HepG2 (cell line): ENCODE measurements at regions of chr22 and their contacts with region 1.

Region 1: DNA sequence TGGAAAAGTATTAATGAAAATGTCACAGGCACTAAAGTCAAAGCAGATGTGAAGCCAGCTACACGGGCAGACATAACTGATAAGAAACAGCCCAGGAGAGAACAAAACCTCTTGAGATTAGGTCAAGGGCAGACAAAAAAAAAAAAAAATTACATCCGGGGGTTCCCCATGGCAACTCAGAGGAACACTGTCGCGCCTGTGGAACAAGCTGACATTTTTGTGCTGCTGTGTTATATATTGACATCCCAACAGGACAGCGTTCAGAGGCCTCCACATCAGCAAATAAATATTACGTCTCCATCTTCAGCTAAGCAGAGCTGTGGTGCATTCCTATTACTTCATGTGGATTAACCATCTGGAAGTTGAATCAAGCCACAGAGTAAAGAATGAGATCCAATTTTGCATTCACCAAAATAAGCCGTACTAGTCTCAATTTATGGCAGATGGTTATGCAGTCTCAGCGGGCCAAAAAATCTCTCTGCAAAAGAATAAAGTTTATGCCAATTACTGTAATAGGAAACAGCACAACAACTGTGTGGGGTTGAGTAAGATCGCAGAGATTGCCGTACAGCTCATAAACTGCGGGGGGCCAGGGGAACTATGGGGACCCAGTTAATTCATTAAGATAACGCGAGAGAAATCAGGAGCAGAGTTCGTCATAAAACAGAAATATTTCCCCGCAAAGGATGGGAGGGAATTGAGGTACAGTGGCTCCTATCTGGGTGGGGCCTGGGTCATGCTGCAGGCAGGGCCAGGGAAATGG is 41.3 kb upstream of the MN1 start:
- DNase-seq: no peak
- ATAC-seq: no peak
- H3K4me3 ChIP-seq: no peak overlapping the region
- H3K27ac ChIP-seq: no peak overlapping the region
- H3K4me1 ChIP-seq: no peaks in the 10 kb centered on the region
- H3K27me3 ChIP-seq: no peaks in the 10 kb centered on the region
- CTCF ChIP-seq: no peak
- EP300 ChIP-seq: no peak
- POLR2A ChIP-seq: no peak
- RAD21 ChIP-seq: no peak

Region 2: DNA sequence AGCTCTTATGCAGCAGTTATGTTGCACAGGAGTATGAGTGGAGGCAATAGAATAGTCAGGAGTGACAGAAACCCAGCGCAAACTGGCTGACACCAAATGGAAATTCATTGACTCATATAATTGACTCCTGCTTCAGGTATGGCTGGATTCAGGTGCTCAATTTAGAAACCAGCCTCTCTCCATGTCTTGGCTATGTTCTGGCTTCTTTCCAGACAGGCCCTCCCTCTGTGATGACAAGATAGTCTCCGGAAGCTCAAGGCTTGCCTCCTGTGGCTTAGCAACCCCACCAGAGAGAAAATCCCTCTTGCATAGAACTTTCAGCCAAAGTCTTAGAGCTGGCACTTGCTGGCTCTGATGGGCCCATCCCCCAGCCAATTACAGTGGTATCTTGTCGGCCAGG is 13.2 kb before region 1 on chr22:
- CTCF ChIA-PET with region 1: no interaction called
- POLR2A ChIA-PET with region 1: no interaction called
- in situ Hi-C with region 1: no loop called
- intact Hi-C with region 1: loop called (anchors 1 kb)
- DNase-seq: no peak
- ATAC-seq: no peak
- H3K4me3 ChIP-seq: no peak overlapping the region
- H3K27ac ChIP-seq: no peak overlapping the region
- H3K4me1 ChIP-seq: 0 out of 2 replicates have a peak, but pooled peaks cover 6% of the 10 kb centered on the region
- H3K27me3 ChIP-seq: no peaks in the 10 kb centered on the region
- CTCF ChIP-seq: no peak
- EP300 ChIP-seq: no peak
- POLR2A ChIP-seq: no peak
- RAD21 ChIP-seq: no peak

Region 3: GRCh38 chr22:27903805-27904473 is 61.1 kb after region 1 on chr22:
- CTCF ChIA-PET with region 1: no interaction called
- POLR2A ChIA-PET with region 1: no interaction called
- in situ Hi-C with region 1: loop called (anchors 10 kb)
- intact Hi-C with region 1: no loop called
- DNase-seq: no peak
- ATAC-seq: no peak
- H3K4me3 ChIP-seq: no peak overlapping the region
- H3K27ac ChIP-seq: no peak overlapping the region
- H3K4me1 ChIP-seq: no peaks in the 10 kb centered on the region
- H3K27me3 ChIP-seq: no peaks in the 10 kb centered on the region
- CTCF ChIP-seq: no peak
- EP300 ChIP-seq: no peak
- POLR2A ChIP-seq: no peak
- RAD21 ChIP-seq: no peak